GM10248 (cell line): ENCODE measurements at regions of chr14 and their contacts with region 1.

Region 1: GRCh38 chr14:78598041-78598920 is 428.1 kb downstream of the NRXN3 start:
- DNase-seq: peak; percentile 64
- CTCF ChIP-seq: peak; percentile 89

Region 2: DNA sequence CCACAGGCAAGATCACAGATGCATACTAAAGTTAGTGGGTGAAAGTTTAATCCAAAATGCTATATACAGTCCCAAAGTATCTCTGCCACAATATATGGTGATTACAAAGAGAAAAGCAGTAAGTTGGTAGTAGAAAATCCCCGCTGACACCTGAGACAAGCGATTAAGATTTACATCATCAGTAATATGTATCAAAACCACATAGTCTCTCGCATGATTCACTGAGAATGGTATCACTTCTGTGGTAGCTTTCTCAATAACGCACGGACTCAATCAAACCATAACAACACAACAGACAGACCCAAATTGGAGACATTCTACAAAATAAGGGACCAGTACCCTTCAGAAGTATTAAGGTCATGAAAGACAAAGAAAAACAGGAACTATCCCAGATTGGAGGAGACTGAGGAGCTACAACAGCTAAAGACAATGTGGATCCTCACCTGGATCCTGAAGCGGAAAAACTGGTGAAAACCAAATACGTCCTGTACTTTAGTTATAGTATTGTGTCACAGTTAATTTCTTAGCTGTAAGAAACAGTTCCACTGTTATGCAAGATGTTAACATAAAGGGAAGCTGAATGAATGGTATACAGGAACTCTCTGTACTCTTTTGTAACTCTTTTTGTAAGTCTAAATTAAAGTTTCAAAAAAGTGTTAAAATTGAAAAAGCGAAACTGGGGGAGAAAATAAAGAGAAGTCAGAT is 1032.8 kb before region 1 on chr14:
- CTCF ChIA-PET with region 1: no interaction called
- POLR2A ChIA-PET with region 1: no interaction called
- DNase-seq: peak; percentile 30
- CTCF ChIP-seq: no peak

Region 3: GRCh38 chr14:78519856-78520255 is 78.4 kb before region 1 on chr14:
- CTCF ChIA-PET with region 1: no interaction called
- POLR2A ChIA-PET with region 1: no interaction called
- DNase-seq: peak; percentile 26
- CTCF ChIP-seq: no peak

Region 4: GRCh38 chr14:78581229-78581628 is 17.1 kb before region 1 on chr14:
- CTCF ChIA-PET with region 1: interaction called, 49 read pairs
- POLR2A ChIA-PET with region 1: no interaction called
- DNase-seq: no peak
- CTCF ChIP-seq: no peak

Region 5: DNA sequence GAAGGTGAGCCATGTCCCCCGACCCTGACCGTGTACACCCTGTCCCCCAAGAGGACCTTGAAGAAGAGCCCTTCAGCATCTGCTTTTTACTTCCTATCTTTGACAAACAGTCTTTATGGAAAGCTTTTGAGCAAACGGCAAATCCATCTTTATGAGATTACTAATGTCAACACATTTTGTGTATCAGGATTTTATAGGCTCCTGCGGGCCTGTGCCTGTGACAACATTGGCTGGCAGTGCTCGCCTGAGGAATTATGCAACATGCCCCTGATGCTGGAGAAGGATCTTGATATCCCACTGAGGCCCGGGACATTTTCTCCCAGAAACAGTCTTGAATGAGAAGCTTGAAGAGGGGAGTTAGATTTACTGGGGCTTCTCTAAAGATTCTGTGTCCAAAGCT is 11.6 kb before region 1 on chr14:
- CTCF ChIA-PET with region 1: interaction called, 49 read pairs
- POLR2A ChIA-PET with region 1: no interaction called
- DNase-seq: no peak
- CTCF ChIP-seq: no peak